GM12878 (cell line): ENCODE measurements at regions of chr3 and their contacts with region 1.

Region 1: GRCh38 chr3:66989860-66990665 is 8.0 kb upstream of the KBTBD8 start:
- DNase-seq: peak; percentile 40
- ATAC-seq: peak; percentile 93
- H3K4me3 ChIP-seq: peak overlapping the region; percentile 67
- H3K27ac ChIP-seq: peak overlapping the region; percentile 45
- H3K4me1 ChIP-seq: no peaks in the 10 kb centered on the region
- H3K27me3 ChIP-seq: no peaks in the 10 kb centered on the region; a peak in 1 of 4 replicates
- CTCF ChIP-seq: peak; percentile 67 to 70 (median 68)
- EP300 ChIP-seq: no peak
- POLR2A ChIP-seq: no peak
- RAD21 ChIP-seq: peak; percentile 83

Region 2: DNA sequence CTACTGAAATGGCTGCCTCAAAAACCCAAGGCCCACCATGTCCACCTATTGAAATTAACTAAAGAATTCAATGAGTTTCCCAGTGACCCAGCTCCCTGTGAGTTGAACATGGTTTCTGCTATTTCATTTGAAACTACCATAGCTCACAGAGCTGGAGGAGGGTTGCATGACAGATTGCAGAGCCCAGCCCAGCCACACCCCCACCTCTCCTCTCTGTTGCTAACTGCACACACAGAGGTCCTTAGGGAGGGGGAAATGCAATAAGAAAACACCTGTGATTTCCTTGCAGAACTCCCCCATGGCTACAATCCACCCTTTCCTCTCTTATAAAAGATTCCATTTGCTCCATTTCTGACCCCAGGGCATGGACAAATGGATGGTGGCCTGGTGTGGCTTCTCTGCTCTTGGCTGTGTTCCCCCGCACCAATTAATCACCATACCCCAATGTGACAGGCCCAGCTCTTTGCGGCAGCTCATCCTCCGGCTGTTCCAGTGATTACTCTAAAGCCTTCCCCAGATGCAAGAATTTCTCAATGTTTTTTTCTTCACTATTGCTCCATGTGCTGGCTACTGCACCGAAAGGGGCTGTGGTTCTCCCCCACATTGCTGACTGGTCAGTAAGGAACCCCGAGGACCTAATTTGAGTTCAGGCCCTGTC is 200.4 kb before region 1 on chr3:
- CTCF ChIA-PET with region 1: no interaction called
- POLR2A ChIA-PET with region 1: no interaction called
- RAD21 ChIA-PET with region 1: no interaction called
- SMC1A ChIA-PET with region 1: no interaction called
- in situ Hi-C with region 1: no loop called
- intact Hi-C with region 1: no loop called
- DNase-seq: no peak
- ATAC-seq: no peak
- H3K4me3 ChIP-seq: no peak overlapping the region
- H3K27ac ChIP-seq: no peak overlapping the region
- H3K4me1 ChIP-seq: no peaks in the 10 kb centered on the region
- H3K27me3 ChIP-seq: no peaks in the 10 kb centered on the region; a peak in 1 of 4 replicates
- CTCF ChIP-seq: no peak
- EP300 ChIP-seq: no peak
- POLR2A ChIP-seq: no peak
- RAD21 ChIP-seq: no peak

Region 3: GRCh38 chr3:66923969-66924368 is 66.1 kb before region 1 on chr3:
- CTCF ChIA-PET with region 1: no interaction called
- POLR2A ChIA-PET with region 1: no interaction called
- RAD21 ChIA-PET with region 1: no interaction called
- SMC1A ChIA-PET with region 1: no interaction called
- in situ Hi-C with region 1: no loop called
- intact Hi-C with region 1: no loop called
- DNase-seq: no peak
- ATAC-seq: peak; percentile 33
- H3K4me3 ChIP-seq: no peak overlapping the region
- H3K27ac ChIP-seq: no peak overlapping the region
- H3K4me1 ChIP-seq: no peaks in the 10 kb centered on the region
- H3K27me3 ChIP-seq: no peaks in the 10 kb centered on the region
- CTCF ChIP-seq: no peak
- EP300 ChIP-seq: no peak
- POLR2A ChIP-seq: no peak
- RAD21 ChIP-seq: no peak

Region 4: GRCh38 chr3:66938338-66938963 is 51.6 kb before region 1 on chr3:
- CTCF ChIA-PET with region 1: interaction called, 28 read pairs
- POLR2A ChIA-PET with region 1: no interaction called
- RAD21 ChIA-PET with region 1: interaction called, 5 read pairs
- SMC1A ChIA-PET with region 1: interaction called, 4 read pairs
- in situ Hi-C with region 1: no loop called
- intact Hi-C with region 1: no loop called
- DNase-seq: peak; percentile 5
- ATAC-seq: peak; percentile 92
- H3K4me3 ChIP-seq: no peak overlapping the region
- H3K27ac ChIP-seq: no peak overlapping the region
- H3K4me1 ChIP-seq: no peaks in the 10 kb centered on the region
- H3K27me3 ChIP-seq: no peaks in the 10 kb centered on the region
- CTCF ChIP-seq: peak; percentile 69 to 72 (median 72)
- EP300 ChIP-seq: no peak
- POLR2A ChIP-seq: no peak
- RAD21 ChIP-seq: peak; percentile 77

Region 5: DNA sequence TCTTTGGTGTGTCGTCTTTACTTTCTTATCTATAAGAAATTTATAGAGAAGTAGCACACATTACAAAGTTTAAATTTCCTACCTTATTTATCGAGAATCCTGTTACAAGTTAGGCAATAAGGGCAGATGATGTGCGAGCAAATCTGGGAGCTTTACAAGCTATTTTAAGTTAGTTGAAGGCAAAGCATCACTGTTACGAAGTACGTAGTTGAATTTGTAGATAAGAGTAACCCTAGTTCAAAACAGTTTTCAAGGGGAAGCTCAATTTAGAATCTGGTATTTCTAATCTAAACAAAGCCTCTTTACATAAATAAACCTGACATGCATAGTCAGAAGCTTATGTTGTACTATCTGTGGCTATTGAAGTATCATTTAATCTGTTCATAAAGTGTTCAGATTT is 16.4 kb after region 1 on chr3:
- CTCF ChIA-PET with region 1: interaction called, 18 read pairs
- POLR2A ChIA-PET with region 1: no interaction called
- RAD21 ChIA-PET with region 1: no interaction called
- SMC1A ChIA-PET with region 1: interaction called, 9 read pairs
- in situ Hi-C with region 1: no loop called
- intact Hi-C with region 1: no loop called
- DNase-seq: no peak
- ATAC-seq: no peak
- H3K4me3 ChIP-seq: no peak overlapping the region
- H3K27ac ChIP-seq: no peak overlapping the region
- H3K4me1 ChIP-seq: no peaks in the 10 kb centered on the region; the same call in 1 of the 2 replicates
- H3K27me3 ChIP-seq: no peaks in the 10 kb centered on the region
- CTCF ChIP-seq: no peak
- EP300 ChIP-seq: no peak
- POLR2A ChIP-seq: no peak
- RAD21 ChIP-seq: no peak

Region 6: GRCh38 chr3:67017211-67017610 is 27.1 kb after region 1 on chr3:
- CTCF ChIA-PET with region 1: interaction called, 11 read pairs
- POLR2A ChIA-PET with region 1: interaction called, 3 read pairs
- RAD21 ChIA-PET with region 1: interaction called, 3 read pairs
- SMC1A ChIA-PET with region 1: interaction called, 6 read pairs
- in situ Hi-C with region 1: no loop called
- intact Hi-C with region 1: no loop called
- DNase-seq: no peak
- ATAC-seq: peak; percentile 50
- H3K4me3 ChIP-seq: no peak overlapping the region; the same call in 1 of the 2 replicates
- H3K27ac ChIP-seq: peak overlapping the region; percentile 20
- H3K4me1 ChIP-seq: peaks cover 38% of the 10 kb centered on the region
- H3K27me3 ChIP-seq: no peaks in the 10 kb centered on the region
- CTCF ChIP-seq: no peak
- EP300 ChIP-seq: no peak
- POLR2A ChIP-seq: no peak
- RAD21 ChIP-seq: no peak

Region 7: GRCh38 chr3:67037615-67038014 is 47.6 kb after region 1 on chr3:
- CTCF ChIA-PET with region 1: interaction called, 14 read pairs
- POLR2A ChIA-PET with region 1: no interaction called
- RAD21 ChIA-PET with region 1: interaction called, 3 read pairs
- SMC1A ChIA-PET with region 1: interaction called, 14 read pairs
- in situ Hi-C with region 1: no loop called
- intact Hi-C with region 1: no loop called
- DNase-seq: no peak
- ATAC-seq: no peak
- H3K4me3 ChIP-seq: no peak overlapping the region
- H3K27ac ChIP-seq: no peak overlapping the region
- H3K4me1 ChIP-seq: no peaks in the 10 kb centered on the region
- H3K27me3 ChIP-seq: no peaks in the 10 kb centered on the region
- CTCF ChIP-seq: peak in 1 of 3 experiments; percentile 8; a peak in 2 of 6 replicates
- EP300 ChIP-seq: no peak
- POLR2A ChIP-seq: no peak
- RAD21 ChIP-seq: peak; percentile 47

Region 8: DNA sequence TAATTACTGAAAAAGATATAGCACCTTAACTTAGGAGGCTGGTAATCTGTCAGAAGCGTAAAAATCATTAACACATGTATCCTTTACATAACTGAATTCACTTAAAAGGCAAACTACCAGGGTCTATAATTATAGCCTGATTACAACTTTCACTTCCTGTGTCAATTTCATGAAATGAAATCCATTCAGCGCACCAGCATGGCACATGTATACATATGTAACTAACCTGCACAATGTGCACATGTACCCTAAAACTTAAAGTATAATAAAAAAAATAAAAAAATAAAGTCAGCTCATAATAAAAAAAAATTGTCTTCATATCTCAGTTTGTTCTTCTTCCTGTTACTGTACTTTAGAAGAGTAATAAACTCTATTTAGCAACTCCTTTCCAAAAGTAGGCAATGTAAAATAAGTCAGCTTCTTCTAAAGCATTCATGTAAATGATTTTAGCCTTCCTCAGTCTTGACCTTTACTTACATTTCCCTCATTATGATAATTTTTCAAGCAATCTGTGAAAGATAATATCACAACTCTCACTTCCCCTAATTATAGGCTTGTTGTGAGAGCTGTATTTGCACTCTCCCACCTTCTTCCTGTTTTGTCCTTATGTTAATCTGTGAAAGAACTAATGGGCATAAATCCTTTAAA is 58.1 kb after region 1 on chr3:
- CTCF ChIA-PET with region 1: interaction called, 47 read pairs
- POLR2A ChIA-PET with region 1: interaction called, 3 read pairs
- RAD21 ChIA-PET with region 1: interaction called, 7 read pairs
- SMC1A ChIA-PET with region 1: interaction called, 31 read pairs
- in situ Hi-C with region 1: no loop called
- intact Hi-C with region 1: no loop called
- DNase-seq: peak; percentile 47
- ATAC-seq: peak; percentile 94
- H3K4me3 ChIP-seq: no peak overlapping the region
- H3K27ac ChIP-seq: peak overlapping the region; percentile 54
- H3K4me1 ChIP-seq: peaks cover 24% of the 10 kb centered on the region
- H3K27me3 ChIP-seq: no peaks in the 10 kb centered on the region
- CTCF ChIP-seq: no peak
- EP300 ChIP-seq: peak in 1 of 2 experiments; percentile 78; a peak in 3 of 4 replicates
- POLR2A ChIP-seq: no peak
- RAD21 ChIP-seq: no peak

Region 9: DNA sequence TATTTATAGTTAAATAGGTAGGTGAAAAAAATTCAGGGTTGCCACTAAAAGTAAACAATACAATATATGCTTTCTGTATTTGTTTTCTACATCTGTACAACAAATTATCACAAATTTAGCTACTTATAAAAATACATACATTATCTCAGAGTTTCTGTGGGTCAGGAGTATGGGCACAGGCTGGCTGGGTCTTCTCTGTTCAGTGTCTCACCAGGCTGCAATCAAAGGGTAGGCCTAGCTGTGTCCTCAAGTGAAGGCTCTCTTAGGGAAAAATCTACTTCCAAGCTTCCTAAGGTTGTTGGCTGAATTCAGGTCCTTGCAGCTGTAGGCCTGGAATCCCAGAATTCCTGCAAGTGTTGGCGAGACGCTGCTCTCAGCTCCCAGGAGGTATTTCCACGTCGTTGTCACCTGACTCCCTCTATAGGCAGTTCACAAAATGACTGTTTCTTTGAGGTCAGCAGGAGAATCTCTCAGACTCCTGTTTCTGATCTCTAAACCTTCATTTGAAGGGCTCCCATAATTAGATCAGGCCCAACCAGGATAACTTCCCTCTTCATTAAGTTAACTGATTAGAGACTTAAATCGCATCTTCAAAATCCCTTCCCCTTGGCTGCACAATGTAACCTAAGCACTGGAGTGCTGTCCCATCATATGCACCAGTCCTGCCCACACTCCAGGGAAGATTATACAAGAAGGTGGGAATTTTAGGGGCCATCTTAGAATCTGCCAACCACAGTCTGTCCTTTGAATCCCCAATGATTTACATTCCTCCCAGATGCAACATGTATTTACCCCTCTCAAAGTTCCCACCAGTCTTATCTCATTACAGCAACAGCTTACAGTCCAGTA is 367.8 kb after region 1 on chr3:
- CTCF ChIA-PET with region 1: interaction called, 4 read pairs
- POLR2A ChIA-PET with region 1: no interaction called
- RAD21 ChIA-PET with region 1: no interaction called
- SMC1A ChIA-PET with region 1: no interaction called
- in situ Hi-C with region 1: no loop called
- intact Hi-C with region 1: loop called (anchors 2 kb)
- DNase-seq: no peak
- ATAC-seq: peak; percentile 75
- H3K4me3 ChIP-seq: no peak overlapping the region
- H3K27ac ChIP-seq: no peak overlapping the region
- H3K4me1 ChIP-seq: no peaks in the 10 kb centered on the region; the same call in 1 of the 2 replicates
- H3K27me3 ChIP-seq: no peaks in the 10 kb centered on the region; a peak in 1 of 4 replicates
- CTCF ChIP-seq: peak; percentile 51 to 53 (median 53); a peak in 5 of 6 replicates
- EP300 ChIP-seq: no peak
- POLR2A ChIP-seq: no peak
- RAD21 ChIP-seq: peak; percentile 57